Vagina (tissue), 2 donors: ENCODE measurements at regions of chr1 and their contacts with region 1.

Region 1: DNA sequence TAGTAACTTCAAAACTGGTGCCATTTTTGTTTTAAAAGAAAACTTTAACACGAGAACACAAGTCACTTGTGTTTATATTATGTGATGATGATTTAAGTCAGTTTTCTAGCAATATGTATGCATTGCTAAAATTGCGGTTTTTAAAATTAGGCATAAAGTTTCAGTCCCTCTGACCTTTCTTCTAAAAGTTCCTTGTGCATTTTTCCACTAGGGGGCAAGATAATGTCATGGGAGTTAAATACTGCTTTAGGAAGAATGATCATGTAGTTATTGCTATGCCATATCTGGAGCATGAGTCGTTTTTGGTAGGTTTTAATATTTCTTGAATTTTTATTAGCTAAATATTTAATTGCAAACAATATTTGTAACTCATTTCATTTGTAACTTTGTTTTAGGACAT is 10.7 kb downstream of the CDC7 start:
- DNase-seq: no peak
- H3K4me3 ChIP-seq: no peak overlapping the region
- H3K27ac ChIP-seq: no peak overlapping the region
- H3K4me1 ChIP-seq: no peaks in the 10 kb centered on the region
- H3K27me3 ChIP-seq: no peaks in the 10 kb centered on the region
- CTCF ChIP-seq: peak in 2 of 3 experiments; percentile 56 to 65
- POLR2A ChIP-seq: no peak

Region 2: GRCh38 chr1:91929250-91929649 is 417.9 kb after region 1 on chr1:
- intact Hi-C with region 1: loop called (anchors 5 kb)
- DNase-seq: no peak
- H3K4me3 ChIP-seq: no peak overlapping the region
- H3K27ac ChIP-seq: no peak overlapping the region
- H3K4me1 ChIP-seq: peaks cover 1% of the 10 kb centered on the region
- H3K27me3 ChIP-seq: no peaks in the 10 kb centered on the region
- CTCF ChIP-seq: no peak
- POLR2A ChIP-seq: no peak